ENCODE measurements at regions of chr1 and their contacts with region 1.

Region 1: GRCh38 chr1:17011439-17012307 is at the start of gene ATP13A2:
- DNase-seq: peak; percentile 93
- ATAC-seq: peak; percentile 95
- total RNA-seq, gene ATP13A2: 16.4 TPM

Region 2: GRCh38 chr1:16883008-16883407 is 128.7 kb before region 1 on chr1:
- intact Hi-C with region 1: no loop called
- DNase-seq: no peak
- ATAC-seq: no peak

Region 3: DNA sequence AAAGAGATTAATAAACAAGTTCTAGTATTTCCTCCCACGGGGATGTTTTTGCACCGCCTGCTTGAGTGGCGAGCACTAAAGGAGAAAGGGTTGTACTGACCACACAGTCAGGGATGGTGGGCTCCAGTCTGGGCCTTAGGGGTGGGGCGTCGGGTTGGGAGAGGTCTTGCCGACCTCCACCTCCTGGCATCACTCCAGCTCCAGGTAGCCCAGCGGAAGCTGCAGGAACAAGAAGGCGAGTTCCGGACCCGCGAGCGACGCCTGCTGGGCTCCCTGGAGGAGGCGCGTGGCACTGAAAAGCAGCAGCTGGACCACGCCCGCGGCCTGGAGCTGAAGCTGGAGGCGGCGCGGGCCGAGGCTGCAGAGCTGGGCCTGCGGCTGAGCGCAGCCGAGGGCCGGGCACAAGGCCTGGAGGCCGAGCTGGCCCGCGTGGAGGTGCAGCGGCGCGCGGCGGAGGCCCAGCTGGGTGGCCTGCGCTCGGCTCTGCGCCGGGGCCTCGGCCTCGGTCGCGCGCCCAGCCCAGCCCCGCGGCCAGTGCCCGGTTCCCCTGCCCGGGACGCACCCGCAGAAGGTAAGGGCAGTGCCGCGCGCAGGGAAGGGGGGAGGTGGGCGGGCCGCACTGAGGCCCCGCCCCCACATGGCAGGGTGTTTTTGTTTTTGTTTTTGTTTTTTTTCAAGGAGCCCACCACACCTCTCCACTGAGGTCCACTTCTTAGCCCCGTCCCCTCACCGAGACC is 50.9 kb before region 1 on chr1:
- intact Hi-C with region 1: loop called (anchors 5 kb)
- DNase-seq: peak; percentile 94
- ATAC-seq: peak; percentile 92

Region 4: DNA sequence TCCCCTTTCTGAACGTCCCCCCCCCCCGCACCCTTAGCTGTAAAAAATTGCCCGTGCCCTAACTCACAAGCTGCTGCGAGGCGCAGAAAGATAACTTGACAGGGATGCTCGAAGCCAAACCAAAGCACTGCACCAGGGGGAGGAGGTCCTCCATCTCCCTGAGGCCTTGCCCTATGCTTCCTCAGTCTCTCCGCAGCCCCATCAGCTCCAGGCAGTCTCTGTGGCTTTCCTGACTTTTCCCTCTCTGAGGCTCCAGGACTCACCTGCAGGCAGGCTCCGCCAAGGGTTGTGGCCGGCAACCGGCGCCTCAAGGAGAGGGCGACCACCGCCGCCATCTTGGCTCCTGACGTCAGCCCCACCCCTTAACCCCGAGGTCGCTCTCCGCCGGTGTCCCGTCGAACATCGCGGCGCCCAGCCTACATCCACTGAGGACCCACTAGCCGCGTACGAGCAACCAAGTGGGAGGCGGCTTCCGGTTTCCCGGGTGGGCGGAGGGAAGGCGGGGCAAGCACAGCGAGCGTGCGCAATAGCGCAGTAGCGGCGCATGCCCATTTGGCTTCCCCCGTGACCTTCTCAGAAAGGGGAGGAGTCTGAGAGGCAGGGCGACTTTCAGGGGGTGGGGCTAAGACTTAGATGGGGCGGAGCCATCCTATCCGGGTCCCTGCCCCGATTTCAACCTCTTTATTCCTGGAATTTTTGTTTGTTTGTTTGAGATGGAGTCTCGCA is 42.2 kb after region 1 on chr1 and contains the start of gene SDHB:
- intact Hi-C with region 1: loop called (anchors 5 kb)
- DNase-seq: peak; percentile 99
- ATAC-seq: peak; percentile 99
- total RNA-seq, gene SDHB: 433 TPM

Measured in Right ventricle myocardium inferior (tissue), 1 donor.